Naive thymus-derived CD8-positive, alpha-beta T cell (primary cell): ENCODE measurements at regions of chr22 and their contacts with region 1.

Region 1: DNA sequence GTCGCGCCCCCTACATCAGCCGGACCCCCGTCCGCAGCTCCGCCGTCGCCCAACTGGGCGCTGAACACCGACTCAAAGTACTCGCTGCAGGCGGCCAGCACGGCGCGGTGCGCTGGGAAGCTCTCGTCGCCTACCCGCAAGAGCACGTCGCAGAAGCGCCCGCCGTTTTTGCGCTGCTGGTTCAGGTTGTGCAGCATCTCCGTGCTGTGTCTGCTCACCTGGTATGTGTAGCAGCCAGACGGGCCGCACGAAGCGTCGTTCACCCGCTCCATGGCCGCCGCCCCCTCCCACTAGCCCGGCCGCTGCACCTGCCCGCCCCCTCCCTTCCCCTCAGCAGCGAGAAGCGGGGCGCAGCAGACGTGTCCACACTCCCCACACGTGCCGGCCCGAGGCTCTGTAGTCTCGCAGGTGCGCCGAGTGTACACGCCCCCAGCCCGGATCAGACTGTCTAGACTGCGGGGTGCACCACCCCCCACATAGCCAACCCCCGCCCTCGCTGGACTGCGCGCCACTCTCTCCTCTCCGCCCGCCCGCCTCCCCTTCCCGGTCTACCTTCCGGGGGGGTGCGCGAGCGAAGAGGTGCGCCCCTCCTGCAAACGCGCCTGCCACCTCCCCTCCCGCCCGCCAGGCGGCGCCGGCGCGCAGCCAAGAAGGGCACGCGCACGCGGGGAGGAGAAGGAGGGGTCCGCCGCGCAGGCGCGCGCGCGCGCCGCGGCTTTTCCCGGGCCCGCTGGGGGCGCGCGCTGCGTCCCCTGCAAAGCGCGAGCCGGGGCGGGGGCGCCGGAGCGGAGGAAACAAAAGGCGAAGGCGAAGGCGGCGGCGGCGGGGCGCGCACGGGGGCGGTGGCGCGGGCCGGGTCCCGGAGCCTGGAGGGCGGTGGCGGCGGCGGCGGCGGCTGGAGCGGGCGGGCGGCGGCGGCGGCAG is 553 bp downstream of the PATZ1 start:
- DNase-seq: peak; percentile 89 to 96 (median 93)
- ATAC-seq: peak; percentile 68 to 71
- H3K4me3 Mint-ChIP-seq: peak overlapping the region; percentile 88 to 96 (median 91)
- H3K27ac Mint-ChIP-seq: peak overlapping the region; percentile 82 to 97 (median 92)
- H3K4me1 Mint-ChIP-seq: peaks cover 25 to 53% (median 51%) of the 10 kb centered on the region in 4 donors
- H3K27me3 Mint-ChIP-seq: no peaks in the 10 kb centered on the region

Region 2: DNA sequence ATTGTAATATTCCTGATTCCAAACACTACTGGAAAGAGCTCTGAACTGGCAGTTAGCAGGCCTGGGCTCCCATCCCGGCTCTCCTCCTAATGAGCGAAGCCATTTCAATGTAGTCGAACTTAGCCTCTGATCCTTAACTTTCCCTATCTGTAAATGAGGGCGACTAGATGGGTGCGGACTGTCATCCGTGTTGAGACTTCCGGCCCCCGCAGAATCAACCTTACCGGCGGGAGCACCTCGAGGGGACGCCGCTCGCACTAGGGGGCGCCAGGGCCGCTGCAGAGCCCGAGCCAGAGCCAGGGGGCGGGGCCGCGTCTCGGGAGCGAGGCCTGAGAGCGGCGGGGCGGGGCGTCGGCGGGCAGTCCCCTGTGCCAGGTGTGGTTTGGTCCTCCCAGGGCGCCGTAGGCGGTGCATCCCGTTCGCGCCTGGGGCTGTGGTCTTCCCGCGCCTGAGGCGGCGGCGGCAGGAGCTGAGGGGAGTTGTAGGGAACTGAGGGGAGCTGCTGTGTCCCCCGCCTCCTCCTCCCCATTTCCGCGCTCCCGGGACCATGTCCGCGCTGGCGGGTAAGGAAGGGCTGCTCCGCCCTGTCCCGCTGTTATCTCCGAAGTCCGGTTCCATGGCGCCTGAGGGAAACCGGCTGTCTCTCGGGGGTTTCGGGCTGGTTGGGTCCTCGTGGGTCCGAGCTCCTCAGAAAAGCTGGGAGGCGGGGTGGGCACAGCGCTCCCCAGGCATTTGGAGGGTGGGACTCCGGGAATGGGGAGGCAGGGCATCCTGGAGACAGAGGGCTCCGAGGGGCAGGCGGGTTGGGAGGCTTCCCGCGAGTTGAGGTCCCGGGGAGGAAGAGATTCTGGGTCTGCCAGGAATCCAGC is 133.5 kb before region 1 on chr22 and contains the start of gene LIMK2:
- POLR2A ChIA-PET with region 1: interaction called, 12 read pairs
- DNase-seq: peak; percentile 89 to 100 (median 96)
- ATAC-seq: peak; percentile 98 to 99
- H3K4me3 Mint-ChIP-seq: peak within 1 kb of the TSS; percentile 82 to 90 (median 89)
- H3K27ac Mint-ChIP-seq: peak within 1 kb of the TSS in 9 of 10 donors; percentile 88 to 94 (median 93)
- H3K4me1 Mint-ChIP-seq: peaks cover 19 to 55% (median 49%) of the 10 kb centered on the region in 4 donors
- H3K27me3 Mint-ChIP-seq: no peaks in the 10 kb centered on the region
- polyA plus RNA-seq, gene LIMK2: 7.4 to 21.0 (median 12.7) TPM

Region 3: DNA sequence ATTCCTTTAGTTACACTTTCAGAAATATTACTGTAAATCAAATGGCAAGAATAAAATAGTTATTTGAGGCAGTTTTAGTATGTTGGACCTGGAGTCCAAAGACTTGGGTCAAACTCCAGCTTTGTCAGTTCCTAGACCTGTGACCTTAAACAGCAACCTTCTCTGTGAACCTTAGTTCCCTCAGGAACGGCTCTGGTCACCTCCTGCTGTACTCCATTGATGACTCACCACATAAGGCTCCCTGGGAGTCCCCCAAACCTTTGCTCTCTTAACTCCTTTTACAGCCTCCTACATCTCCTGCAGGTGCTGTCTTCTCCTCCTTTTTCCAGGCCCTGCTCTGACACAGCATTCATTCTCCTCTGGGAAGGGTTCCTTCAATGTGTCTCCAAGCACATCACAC is 104.4 kb before region 1 on chr22:
- POLR2A ChIA-PET with region 1: no interaction called
- DNase-seq: no peak
- ATAC-seq: no peak
- H3K4me3 Mint-ChIP-seq: no peak overlapping the region
- H3K27ac Mint-ChIP-seq: peak overlapping the region in 5 of 10 donors; percentile 16 to 60 (median 37)
- H3K4me1 Mint-ChIP-seq: peaks cover 9 to 19% (median 16%) of the 10 kb centered on the region in 4 donors
- H3K27me3 Mint-ChIP-seq: no peaks in the 10 kb centered on the region

Region 4: DNA sequence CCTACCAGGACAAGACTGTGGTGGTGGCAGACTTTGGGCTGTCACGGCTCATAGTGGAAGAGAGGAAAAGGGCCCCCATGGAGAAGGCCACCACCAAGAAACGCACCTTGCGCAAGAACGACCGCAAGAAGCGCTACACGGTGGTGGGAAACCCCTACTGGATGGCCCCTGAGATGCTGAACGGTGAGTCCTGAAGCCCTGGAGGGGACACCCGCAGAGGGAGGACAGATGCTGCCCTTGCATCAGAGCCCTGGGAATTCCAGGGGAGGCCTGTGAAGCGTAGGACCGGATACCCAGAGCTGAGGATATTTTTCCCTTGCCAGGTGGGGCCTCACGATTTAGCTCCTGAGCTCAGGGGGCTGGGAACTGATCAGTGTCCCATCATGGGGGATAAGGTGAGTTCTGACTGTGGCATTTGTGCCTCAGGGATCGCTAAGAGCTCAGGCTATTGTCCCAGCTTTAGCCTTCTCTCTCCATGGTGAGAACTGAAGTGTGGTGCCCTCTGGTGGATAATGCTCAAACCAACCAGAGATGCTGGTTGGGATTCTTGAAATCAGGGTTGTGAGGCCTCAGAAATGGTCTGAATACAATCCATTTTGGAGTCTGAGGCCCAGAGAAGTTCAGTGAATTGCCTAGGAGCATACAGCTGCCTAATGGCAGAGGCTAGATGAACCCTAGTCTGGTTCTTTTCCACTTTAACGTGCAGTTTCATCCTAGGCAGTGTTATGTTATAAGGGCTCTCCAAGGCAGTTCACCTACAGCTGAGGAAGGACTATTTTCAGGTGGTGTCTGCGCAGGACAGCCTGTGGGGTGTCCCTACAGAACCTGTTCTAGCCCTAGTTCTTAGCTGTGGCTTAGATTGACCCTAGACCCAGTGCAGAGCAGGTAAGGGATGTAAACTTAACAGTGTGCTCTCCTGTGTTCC is 72.8 kb before region 1 on chr22:
- POLR2A ChIA-PET with region 1: interaction called, 136 read pairs
- DNase-seq: peak in 7 of 10 donors; percentile 49 to 77 (median 53)
- ATAC-seq: peak; percentile 65 to 66
- H3K4me3 Mint-ChIP-seq: peak overlapping the region in 8 of 10 donors; percentile 7 to 66 (median 24)
- H3K27ac Mint-ChIP-seq: peak overlapping the region; percentile 89 to 97 (median 94)
- H3K4me1 Mint-ChIP-seq: peaks cover 42 to 82% (median 73%) of the 10 kb centered on the region in 4 donors
- H3K27me3 Mint-ChIP-seq: no peaks in the 10 kb centered on the region

Region 5: DNA sequence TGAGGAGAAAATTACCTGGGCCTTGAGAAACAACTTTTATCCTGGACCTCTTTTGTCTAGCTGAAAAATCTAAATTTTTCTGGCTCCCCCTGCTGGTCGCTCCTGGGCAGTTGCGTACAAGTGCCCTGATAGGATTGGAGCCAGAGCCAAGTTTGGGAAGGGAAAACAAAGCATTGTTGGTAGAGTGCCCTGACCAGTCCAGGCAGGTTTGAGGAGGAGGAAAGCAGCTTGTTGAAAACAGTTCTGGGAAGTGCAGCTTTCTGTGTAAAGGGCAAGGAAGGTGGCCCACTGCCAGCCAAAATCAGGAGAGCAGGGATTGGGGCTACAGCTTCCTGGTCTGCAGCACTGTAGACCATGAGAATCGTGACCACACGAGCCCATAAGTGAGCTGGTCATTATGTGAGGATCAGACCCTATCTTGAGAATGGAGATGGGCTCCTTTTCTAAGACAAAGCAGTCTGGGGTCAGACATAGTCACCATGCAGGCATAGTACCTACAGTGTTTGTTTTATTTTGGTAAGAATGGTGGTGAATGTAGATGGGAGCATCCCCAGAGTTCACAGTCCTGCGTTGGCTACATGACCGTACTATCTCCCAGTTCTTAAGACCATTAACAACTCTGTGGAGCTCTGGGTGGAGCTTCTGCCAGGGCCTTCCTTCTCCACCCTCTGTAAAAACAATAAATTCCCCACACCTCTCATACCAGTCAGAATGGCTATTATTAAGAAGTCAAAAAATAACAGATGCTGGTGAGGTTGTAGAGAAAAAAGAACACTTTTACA is 32.0 kb before region 1 on chr22:
- POLR2A ChIA-PET with region 1: interaction called, 12 read pairs
- DNase-seq: peak; percentile 36 to 79 (median 64)
- ATAC-seq: peak; percentile 71 to 78
- H3K4me3 Mint-ChIP-seq: peak overlapping the region in 2 of 10 donors; percentile 1 to 3
- H3K27ac Mint-ChIP-seq: peak overlapping the region; percentile 15 to 92 (median 64)
- H3K4me1 Mint-ChIP-seq: peaks cover 7 to 29% (median 17%) of the 10 kb centered on the region in 4 donors
- H3K27me3 Mint-ChIP-seq: no peaks in the 10 kb centered on the region

Region 6: GRCh38 chr22:31378123-31378522 is 32.5 kb after region 1 on chr22:
- POLR2A ChIA-PET with region 1: no interaction called
- DNase-seq: no peak
- ATAC-seq: no peak
- H3K4me3 Mint-ChIP-seq: no peak overlapping the region
- H3K27ac Mint-ChIP-seq: no peak overlapping the region
- H3K4me1 Mint-ChIP-seq: no peaks in the 10 kb centered on the region
- H3K27me3 Mint-ChIP-seq: no peaks in the 10 kb centered on the region

Region 7: DNA sequence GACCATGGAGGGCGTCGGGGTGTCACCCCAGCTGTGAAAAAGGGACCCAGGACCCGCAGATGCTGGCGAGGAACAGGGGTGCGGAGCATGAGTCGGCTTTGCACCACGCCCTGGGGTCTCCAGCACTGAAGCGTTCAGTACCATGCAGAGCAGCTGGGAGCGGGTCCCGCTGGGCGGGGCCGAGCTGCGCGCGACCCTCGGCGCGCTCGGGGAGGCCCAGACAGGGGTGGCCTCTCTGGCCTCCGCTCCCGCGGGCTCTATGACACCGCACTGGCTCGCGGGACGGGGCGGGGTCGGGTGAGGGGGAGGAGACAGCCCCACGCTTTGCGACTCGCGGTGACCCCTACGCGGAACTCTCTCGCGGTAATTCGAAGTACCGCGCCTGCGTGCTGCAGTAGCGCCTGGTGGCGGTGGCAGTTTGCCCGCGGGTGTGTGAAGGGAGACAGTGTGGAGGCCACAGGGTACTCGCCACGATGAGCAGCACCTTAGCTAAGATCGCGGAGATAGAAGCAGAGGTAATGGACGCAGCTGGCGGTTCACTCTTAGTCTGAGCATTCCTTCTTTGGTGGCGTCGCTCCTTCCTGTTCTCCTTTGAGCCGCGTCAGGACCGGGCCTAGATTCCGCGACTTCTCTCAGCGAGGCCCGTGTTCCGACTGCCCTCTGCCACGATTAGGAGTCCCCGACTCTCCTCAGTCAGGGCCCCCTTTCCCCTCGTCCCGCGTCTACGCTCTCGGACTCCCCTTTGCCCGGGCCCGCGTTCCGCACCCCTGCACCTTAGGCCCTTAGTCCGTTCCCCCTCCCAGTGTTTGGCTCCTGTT is 53.8 kb after region 1 on chr22 and contains the start of gene DRG1:
- POLR2A ChIA-PET with region 1: interaction called, 69 read pairs
- DNase-seq: peak; percentile 92 to 98 (median 95)
- ATAC-seq: peak; percentile 96 to 97
- H3K4me3 Mint-ChIP-seq: peak within 1 kb of the TSS; percentile 89 to 98 (median 94)
- H3K27ac Mint-ChIP-seq: peak within 1 kb of the TSS; percentile 90 to 97 (median 96)
- H3K4me1 Mint-ChIP-seq: peaks cover 12 to 38% (median 23%) of the 10 kb centered on the region in 4 donors
- H3K27me3 Mint-ChIP-seq: peaks cover 0 to under 1% (median 0%) of the 10 kb centered on the region in 5 donors
- polyA plus RNA-seq, gene DRG1: 82.1 to 92.7 (median 90.8) TPM

Region 8: GRCh38 chr22:31489604-31490495 is 144.3 kb after region 1 on chr22 and contains the start of gene EIF4ENIF1:
- POLR2A ChIA-PET with region 1: interaction called, 11 read pairs
- DNase-seq: peak; percentile 72 to 91 (median 82)
- ATAC-seq: peak; percentile 73 to 78
- H3K4me3 Mint-ChIP-seq: peak within 1 kb of the TSS; percentile 90 to 99 (median 94)
- H3K27ac Mint-ChIP-seq: peak within 1 kb of the TSS; percentile 85 to 100 (median 98)
- H3K4me1 Mint-ChIP-seq: peaks cover 10 to 55% (median 41%) of the 10 kb centered on the region in 4 donors
- H3K27me3 Mint-ChIP-seq: no peaks in the 10 kb centered on the region
- polyA plus RNA-seq, gene EIF4ENIF1: 6.2 to 13.4 (median 7.7) TPM

Region 9: GRCh38 chr22:31630331-31631329 is 285.0 kb after region 1 on chr22:
- POLR2A ChIA-PET with region 1: interaction called, 19 read pairs
- DNase-seq: peak; percentile 82 to 94 (median 86)
- ATAC-seq: peak; percentile 90 to 94
- H3K4me3 Mint-ChIP-seq: peak overlapping the region; percentile 83 to 93 (median 88)
- H3K27ac Mint-ChIP-seq: peak overlapping the region; percentile 84 to 97 (median 94)
- H3K4me1 Mint-ChIP-seq: peaks cover 26 to 68% (median 55%) of the 10 kb centered on the region in 4 donors
- H3K27me3 Mint-ChIP-seq: no peaks in the 10 kb centered on the region